ENCODE measurements at regions of chr17 and their contacts with region 1.

Region 1: GRCh38 chr17:8857919-8858318 is 9.6 kb downstream of the PIK3R6 start:
- DNase-seq: peak; percentile 63
- ATAC-seq: peak; percentile 82
- H3K4me3 Mint-ChIP-seq: peak overlapping the region; percentile 70
- H3K27ac Mint-ChIP-seq: peak overlapping the region; percentile 65
- H3K4me1 Mint-ChIP-seq: peaks cover 51% of the 10 kb centered on the region
- H3K27me3 Mint-ChIP-seq: no peaks in the 10 kb centered on the region
- CTCF ChIP-seq: no peak

Region 2: GRCh38 chr17:8409966-8410864 is 447.7 kb before region 1 on chr17:
- CTCF ChIA-PET with region 1: no interaction called
- POLR2A ChIA-PET with region 1: no interaction called
- intact Hi-C with region 1: no loop called
- DNase-seq: peak; percentile 66
- ATAC-seq: peak; percentile 81
- H3K4me3 Mint-ChIP-seq: no peak overlapping the region
- H3K27ac Mint-ChIP-seq: no peak overlapping the region
- H3K4me1 Mint-ChIP-seq: peaks cover 4% of the 10 kb centered on the region
- H3K27me3 Mint-ChIP-seq: peaks cover 13% of the 10 kb centered on the region
- CTCF ChIP-seq: peak; percentile 87

Region 3: GRCh38 chr17:8806926-8807550 is 50.9 kb before region 1 on chr17:
- CTCF ChIA-PET with region 1: interaction called, 4 read pairs
- POLR2A ChIA-PET with region 1: interaction called, 19 read pairs
- intact Hi-C with region 1: loop called (anchors 1 kb)
- DNase-seq: peak; percentile 34
- ATAC-seq: peak; percentile 90
- H3K4me3 Mint-ChIP-seq: peak overlapping the region; percentile 56
- H3K27ac Mint-ChIP-seq: peak overlapping the region; percentile 92
- H3K4me1 Mint-ChIP-seq: peaks cover 42% of the 10 kb centered on the region
- H3K27me3 Mint-ChIP-seq: no peaks in the 10 kb centered on the region
- CTCF ChIP-seq: no peak

Region 4: GRCh38 chr17:8843344-8843743 is 14.6 kb before region 1 on chr17:
- CTCF ChIA-PET with region 1: no interaction called
- POLR2A ChIA-PET with region 1: interaction called, 5 read pairs
- intact Hi-C with region 1: loop called (anchors 2 kb)
- DNase-seq: no peak
- ATAC-seq: no peak
- H3K4me3 Mint-ChIP-seq: no peak overlapping the region
- H3K27ac Mint-ChIP-seq: peak overlapping the region; percentile 9
- H3K4me1 Mint-ChIP-seq: peaks cover 18% of the 10 kb centered on the region
- H3K27me3 Mint-ChIP-seq: no peaks in the 10 kb centered on the region
- CTCF ChIP-seq: no peak

Region 5: GRCh38 chr17:8941520-8941919 is 83.6 kb after region 1 on chr17:
- CTCF ChIA-PET with region 1: no interaction called
- POLR2A ChIA-PET with region 1: interaction called, 12 read pairs
- intact Hi-C with region 1: no loop called
- DNase-seq: no peak
- ATAC-seq: peak; percentile 57
- H3K4me3 Mint-ChIP-seq: peak overlapping the region; percentile 51
- H3K27ac Mint-ChIP-seq: peak overlapping the region; percentile 73
- H3K4me1 Mint-ChIP-seq: peaks cover 68% of the 10 kb centered on the region
- H3K27me3 Mint-ChIP-seq: no peaks in the 10 kb centered on the region
- CTCF ChIP-seq: no peak